Right ventricle myocardium inferior (tissue), 1 donor: ENCODE measurements at regions of chr17 and their contacts with region 1.

Region 1: GRCh38 chr17:61389670-61390478 is 9.8 kb upstream of the TBX2 start:
- DNase-seq: no peak
- ATAC-seq: peak; percentile 49

Region 2: DNA sequence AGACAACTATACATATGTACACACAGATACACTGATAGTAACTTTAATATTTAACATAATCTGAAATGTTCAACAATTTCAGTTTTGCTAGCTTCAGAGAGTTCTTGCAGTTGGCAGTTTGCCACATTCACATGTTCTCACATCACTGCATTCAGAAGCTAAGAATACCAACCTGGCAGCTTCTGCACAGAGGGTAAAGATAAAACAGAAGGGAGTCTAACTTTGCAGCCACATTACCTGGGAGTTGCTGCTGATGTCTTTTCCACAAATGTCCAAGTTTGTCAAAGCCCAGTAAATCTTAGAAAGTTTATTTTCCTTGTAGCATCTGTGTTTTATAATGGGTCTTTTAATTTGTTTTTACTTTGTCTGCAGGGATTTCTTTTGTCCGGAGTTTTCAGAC is 380.2 kb before region 1 on chr17:
- intact Hi-C with region 1: loop called (anchors 5 kb)
- DNase-seq: no peak
- ATAC-seq: no peak

Region 3: DNA sequence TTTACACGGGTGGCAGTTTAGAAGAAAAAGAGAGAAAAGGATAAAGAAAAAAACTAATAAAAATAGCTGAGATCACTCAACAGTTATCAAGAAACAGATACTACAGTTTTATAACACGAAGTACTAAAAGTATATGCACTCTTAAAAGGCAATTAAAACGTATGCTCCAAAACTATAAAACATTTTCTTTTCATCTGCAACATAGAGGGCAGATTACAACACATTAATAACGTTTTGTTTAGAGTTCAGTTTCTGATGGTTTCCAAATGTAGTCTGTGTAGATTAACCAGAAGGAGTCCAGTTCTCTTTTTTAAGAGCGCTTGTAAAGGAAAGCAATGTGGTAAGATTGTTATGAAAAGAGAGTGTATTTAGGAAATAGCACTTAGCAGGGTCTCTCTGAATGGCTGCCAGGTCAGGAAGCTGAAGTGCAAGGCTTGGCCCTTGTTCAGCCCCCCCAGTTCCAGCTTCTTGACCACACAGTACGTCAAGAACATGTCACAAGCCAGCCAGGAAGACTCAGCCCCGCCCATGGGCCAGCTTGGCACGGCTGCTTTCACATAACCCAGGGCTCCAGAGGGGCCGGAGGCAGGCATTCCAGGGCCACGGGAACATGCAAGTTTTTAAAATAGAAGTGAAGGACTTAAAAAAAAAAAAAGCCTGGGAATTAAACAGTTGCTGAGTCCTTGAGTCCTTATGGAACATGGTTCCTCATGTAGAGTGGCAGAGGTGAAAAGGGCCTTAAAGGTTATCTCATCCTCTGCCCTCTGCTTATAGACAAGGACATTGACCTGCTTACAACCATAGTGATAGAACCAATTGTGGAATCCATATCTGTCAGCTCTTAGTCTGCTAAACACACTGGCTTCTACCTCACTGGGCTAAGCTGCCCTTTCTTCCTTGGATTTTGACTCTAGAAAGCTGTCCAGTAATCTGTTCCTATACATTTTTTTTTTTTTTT is 137.7 kb before region 1 on chr17:
- intact Hi-C with region 1: loop called (anchors 10 kb)
- DNase-seq: peak; percentile 95
- ATAC-seq: peak; percentile 95

Region 4: DNA sequence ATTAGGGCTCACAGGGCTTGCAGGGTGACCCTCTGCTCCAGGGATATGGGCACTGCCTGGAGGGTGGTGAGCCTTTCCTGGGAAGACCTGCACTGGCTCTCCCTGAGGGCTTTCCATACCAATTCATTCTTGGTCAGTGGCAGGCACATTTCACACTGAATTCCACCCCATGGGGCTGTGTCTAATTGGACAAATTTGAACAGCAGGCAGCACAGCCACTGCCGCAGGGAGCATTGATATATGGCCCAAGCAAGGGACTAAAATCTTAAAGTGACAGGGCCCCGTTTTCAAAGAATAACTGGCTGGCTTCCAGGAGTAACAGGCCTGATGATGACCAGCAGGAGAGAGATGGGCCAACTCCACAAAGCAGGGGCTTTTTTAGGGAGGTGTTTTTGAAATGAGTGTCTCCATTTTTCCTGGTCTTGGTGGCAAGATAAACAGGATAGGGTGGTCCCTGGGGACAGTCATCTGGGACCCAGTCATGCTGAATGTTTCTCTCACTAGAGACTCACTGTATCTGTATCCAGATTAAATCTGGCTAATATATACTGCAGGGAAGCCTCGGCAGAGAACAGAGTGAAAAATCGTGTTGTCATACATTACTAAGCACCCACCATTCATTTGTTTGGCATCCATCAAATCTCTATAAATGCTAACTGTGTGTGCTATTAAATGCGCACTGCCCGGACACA is 64.3 kb before region 1 on chr17:
- intact Hi-C with region 1: loop called (anchors 5 kb)
- DNase-seq: no peak
- ATAC-seq: no peak

Region 5: DNA sequence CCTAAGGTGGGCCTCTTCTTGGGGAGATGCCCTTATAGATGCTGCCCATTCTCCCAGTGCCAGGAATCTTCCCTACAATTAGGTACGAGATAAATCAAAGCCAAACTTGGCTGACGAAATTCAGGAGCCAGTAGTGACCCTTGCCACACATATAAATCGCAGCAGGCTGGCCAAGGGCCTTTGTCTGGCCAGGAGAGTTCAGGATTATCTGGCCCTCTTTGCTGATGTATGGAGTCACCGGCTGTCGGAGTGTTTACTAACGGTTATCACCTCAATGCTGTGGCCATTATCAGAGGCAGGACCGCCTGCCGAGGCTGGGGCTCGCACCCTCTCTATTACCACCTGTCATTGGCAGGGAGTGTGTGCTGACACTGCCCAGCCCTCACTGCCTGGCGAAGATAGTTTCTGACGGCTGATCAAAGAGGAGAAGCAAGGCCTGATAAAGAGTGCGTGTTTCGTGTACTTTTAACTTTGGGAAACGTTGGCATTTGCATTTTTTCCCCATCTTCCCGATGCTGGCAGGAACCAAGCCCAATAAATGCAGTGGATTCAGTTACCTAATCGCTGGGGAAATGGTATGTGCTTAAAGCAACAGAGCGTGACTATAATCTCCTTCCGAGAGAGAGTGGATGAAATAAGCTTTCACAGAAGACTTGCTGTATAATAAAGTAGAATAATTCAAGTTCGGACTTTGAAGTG is 23.0 kb before region 1 on chr17:
- intact Hi-C with region 1: no loop called
- DNase-seq: peak; percentile 78
- ATAC-seq: peak; percentile 95